ENCODE measurements at regions of chr2 and their contacts with region 1.

Region 1: GRCh38 chr2:12543978-12544558 is 172.7 kb upstream of the TRIB2 start:
- DNase-seq: peak; percentile 35
- ATAC-seq: peak; percentile 72
- H3K4me3 ChIP-seq: peak overlapping the region in 1 of 5 experiments; percentile 4
- H3K4me3 Mint-ChIP-seq: peak overlapping the region; percentile 65
- H3K27ac ChIP-seq: peak overlapping the region in 1 of 2 donors; percentile 36
- H3K27ac Mint-ChIP-seq: peak overlapping the region; percentile 84
- H3K4me1 ChIP-seq: peaks cover 16 to 18% of the 10 kb centered on the region in 2 donors
- H3K4me1 Mint-ChIP-seq: peaks cover 29% of the 10 kb centered on the region
- H3K27me3 ChIP-seq: no peaks in the 10 kb centered on the region
- H3K27me3 Mint-ChIP-seq: peaks cover 4% of the 10 kb centered on the region
- CTCF ChIP-seq: no peak

Region 2: GRCh38 chr2:12501469-12502158 is 42.5 kb before region 1 on chr2:
- CTCF ChIA-PET with region 1: no interaction called
- POLR2A ChIA-PET with region 1: no interaction called
- intact Hi-C with region 1: loop called (anchors 5 kb)
- DNase-seq: peak; percentile 67
- ATAC-seq: peak; percentile 81
- H3K4me3 ChIP-seq: peak overlapping the region in 2 of 5 experiments; percentile 15 to 42
- H3K4me3 Mint-ChIP-seq: peak overlapping the region; percentile 74
- H3K27ac ChIP-seq: peak overlapping the region; percentile 43 to 57
- H3K27ac Mint-ChIP-seq: peak overlapping the region; percentile 81
- H3K4me1 ChIP-seq: peaks cover 55 to 62% of the 10 kb centered on the region in 2 donors
- H3K4me1 Mint-ChIP-seq: peaks cover 67% of the 10 kb centered on the region
- H3K27me3 ChIP-seq: peaks cover 0 to 8% (median 3%) of the 10 kb centered on the region in 4 experiments
- H3K27me3 Mint-ChIP-seq: peaks cover 11% of the 10 kb centered on the region
- CTCF ChIP-seq: no peak